ENCODE measurements at regions of chr19 and their contacts with region 1.

Region 1: DNA sequence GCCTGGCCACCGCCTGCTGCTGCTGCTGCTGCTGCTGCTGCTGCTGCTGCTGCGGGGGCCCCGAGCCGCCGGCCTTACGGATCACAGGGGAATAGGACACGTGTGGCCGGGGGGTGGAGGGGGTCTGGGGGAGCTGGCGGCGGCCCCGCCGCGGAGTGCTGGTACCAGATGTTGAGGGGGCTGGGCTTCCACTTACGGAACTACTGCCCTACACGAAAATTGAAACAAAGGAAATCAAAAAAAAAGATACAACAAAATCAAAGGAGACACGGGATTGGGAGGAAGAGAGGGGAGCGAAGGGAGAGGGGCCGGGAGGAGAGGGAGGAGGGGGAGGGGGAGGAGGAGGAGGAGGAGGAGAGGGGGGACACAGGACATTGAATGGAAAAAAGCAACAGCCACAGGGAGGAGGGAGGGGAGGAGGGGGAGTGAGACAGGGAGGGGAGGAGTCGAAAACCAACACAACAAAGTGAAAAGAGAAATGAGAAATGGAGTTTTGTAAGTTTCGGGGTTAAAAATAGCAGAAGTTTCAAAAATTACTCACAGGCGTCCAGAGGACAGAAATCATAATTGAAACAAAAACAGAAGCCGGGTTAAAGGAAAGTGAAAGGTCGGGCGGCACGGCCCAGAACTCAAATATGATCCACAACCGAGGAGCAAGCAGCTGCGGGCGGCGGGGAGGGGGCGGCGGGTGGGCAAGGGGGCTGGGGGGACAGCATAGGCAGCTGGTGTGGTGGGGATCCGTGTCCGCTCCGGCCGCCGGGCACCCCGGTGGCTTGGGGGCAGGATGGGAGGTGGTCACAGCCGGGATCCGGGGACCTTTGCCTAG is 57.8 kb downstream of the IER2 start:
- DNase-seq: peak; percentile 96
- CTCF ChIP-seq: no peak

Region 2: GRCh38 chr19:12890787-12891552 is 317.1 kb before region 1 on chr19 and contains the start of gene GCDH:
- in situ Hi-C with region 1: no loop called
- DNase-seq: peak; percentile 97
- CTCF ChIP-seq: no peak

Region 3: GRCh38 chr19:13255041-13255718 is 47.1 kb after region 1 on chr19:
- in situ Hi-C with region 1: loop called (anchors 10 kb)
- DNase-seq: no peak
- CTCF ChIP-seq: no peak

Measured in GM13977 (cell line).